Right ventricle myocardium superior (tissue), 1 donor: ENCODE measurements at regions of chr6 and their contacts with region 1.

Region 1: GRCh38 chr6:52664186-52664990 is 6.5 kb upstream of the TMEM14A start:
- DNase-seq: peak; percentile 91
- ATAC-seq: peak; percentile 99

Region 2: GRCh38 chr6:52284460-52285176 is 379.8 kb before region 1 on chr6 and contains the start of gene MCM3:
- intact Hi-C with region 1: loop called (anchors 5 kb)
- DNase-seq: peak; percentile 98
- ATAC-seq: peak; percentile 100
- total RNA-seq, gene MCM3: 19.3 TPM

Region 3: GRCh38 chr6:52503848-52504781 is 160.3 kb before region 1 on chr6:
- intact Hi-C with region 1: loop called (anchors 10 kb)
- DNase-seq: peak; percentile 94
- ATAC-seq: peak; percentile 86

Region 4: GRCh38 chr6:52603000-52603795 is 61.2 kb before region 1 on chr6:
- intact Hi-C with region 1: loop called (anchors 5 kb)
- DNase-seq: no peak
- ATAC-seq: no peak

Region 5: GRCh38 chr6:52741872-52742271 is 77.5 kb after region 1 on chr6:
- intact Hi-C with region 1: no loop called
- DNase-seq: no peak
- ATAC-seq: no peak

Region 6: GRCh38 chr6:52846002-52846401 is 181.6 kb after region 1 on chr6:
- intact Hi-C with region 1: no loop called
- DNase-seq: no peak
- ATAC-seq: no peak

Region 7: GRCh38 chr6:53417140-53417539 is 752.8 kb after region 1 on chr6:
- intact Hi-C with region 1: no loop called
- DNase-seq: no peak
- ATAC-seq: no peak